ENCODE measurements at regions of chr9 and their contacts with region 1.

Region 1: DNA sequence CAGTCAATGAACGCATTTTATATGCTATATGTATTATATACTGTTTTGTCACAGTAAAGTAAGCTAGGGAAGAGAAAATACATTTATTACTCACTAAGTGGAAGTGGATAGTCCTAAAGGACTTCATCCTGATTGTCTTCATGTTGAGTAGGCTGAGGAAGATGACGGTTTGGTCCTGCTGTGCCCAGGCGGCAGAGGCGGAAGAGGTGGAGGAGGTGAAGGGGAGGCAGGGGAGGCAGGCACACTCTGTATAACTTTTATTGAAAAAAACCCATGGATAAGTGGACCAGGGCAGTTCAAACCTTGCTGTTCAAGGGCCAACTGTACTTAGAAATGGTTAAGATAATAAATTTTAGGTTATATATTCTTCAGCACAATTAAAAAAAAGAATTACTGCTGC is 28.5 kb downstream of the TJP2 start:
- DNase-seq: no peak
- ATAC-seq: no peak
- H3K4me3 ChIP-seq: no peak overlapping the region
- H3K27ac ChIP-seq: no peak overlapping the region
- H3K4me1 ChIP-seq: no peaks in the 10 kb centered on the region
- H3K27me3 ChIP-seq: no peaks in the 10 kb centered on the region
- CTCF ChIP-seq: no peak

Region 2: GRCh38 chr9:68416936-68417564 is 785.5 kb before region 1 on chr9:
- CTCF ChIA-PET with region 1: no interaction called
- POLR2A ChIA-PET with region 1: no interaction called
- intact Hi-C with region 1: no loop called
- DNase-seq: peak; percentile 49
- ATAC-seq: no peak
- H3K4me3 ChIP-seq: no peak overlapping the region
- H3K27ac ChIP-seq: no peak overlapping the region
- H3K4me1 ChIP-seq: no peaks in the 10 kb centered on the region
- H3K27me3 ChIP-seq: no peaks in the 10 kb centered on the region
- CTCF ChIP-seq: peak; percentile 58

Region 3: DNA sequence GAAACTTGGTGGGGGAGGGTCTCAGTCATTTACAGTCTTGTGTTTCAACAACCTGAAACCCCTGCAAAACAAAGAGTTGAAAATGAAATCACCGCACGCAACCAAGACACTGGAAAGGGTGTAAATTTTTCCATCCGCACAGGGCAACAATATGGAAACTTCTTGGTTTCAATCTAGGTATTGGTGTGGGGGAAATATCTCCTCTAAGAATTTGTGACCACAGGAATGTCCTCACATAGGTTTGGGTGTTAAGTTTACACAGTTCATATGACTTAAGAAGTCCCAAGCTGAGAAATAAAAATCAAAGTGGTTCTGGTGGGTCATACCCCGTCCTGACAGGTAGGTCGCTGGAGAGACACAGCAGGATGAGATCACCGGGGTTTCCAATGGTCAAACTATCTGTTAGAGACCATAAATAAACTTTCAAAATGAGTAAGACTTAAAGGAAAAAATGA is 549.4 kb before region 1 on chr9:
- CTCF ChIA-PET with region 1: no interaction called
- POLR2A ChIA-PET with region 1: interaction called, 10 read pairs
- intact Hi-C with region 1: no loop called
- DNase-seq: no peak
- ATAC-seq: no peak
- H3K4me3 ChIP-seq: no peak overlapping the region
- H3K27ac ChIP-seq: no peak overlapping the region
- H3K4me1 ChIP-seq: peaks cover 19% of the 10 kb centered on the region
- H3K27me3 ChIP-seq: peaks cover 36% of the 10 kb centered on the region
- CTCF ChIP-seq: no peak

Measured in PC-3 (cell line).